ENCODE measurements at regions of chr5 and their contacts with region 1.

Region 1: DNA sequence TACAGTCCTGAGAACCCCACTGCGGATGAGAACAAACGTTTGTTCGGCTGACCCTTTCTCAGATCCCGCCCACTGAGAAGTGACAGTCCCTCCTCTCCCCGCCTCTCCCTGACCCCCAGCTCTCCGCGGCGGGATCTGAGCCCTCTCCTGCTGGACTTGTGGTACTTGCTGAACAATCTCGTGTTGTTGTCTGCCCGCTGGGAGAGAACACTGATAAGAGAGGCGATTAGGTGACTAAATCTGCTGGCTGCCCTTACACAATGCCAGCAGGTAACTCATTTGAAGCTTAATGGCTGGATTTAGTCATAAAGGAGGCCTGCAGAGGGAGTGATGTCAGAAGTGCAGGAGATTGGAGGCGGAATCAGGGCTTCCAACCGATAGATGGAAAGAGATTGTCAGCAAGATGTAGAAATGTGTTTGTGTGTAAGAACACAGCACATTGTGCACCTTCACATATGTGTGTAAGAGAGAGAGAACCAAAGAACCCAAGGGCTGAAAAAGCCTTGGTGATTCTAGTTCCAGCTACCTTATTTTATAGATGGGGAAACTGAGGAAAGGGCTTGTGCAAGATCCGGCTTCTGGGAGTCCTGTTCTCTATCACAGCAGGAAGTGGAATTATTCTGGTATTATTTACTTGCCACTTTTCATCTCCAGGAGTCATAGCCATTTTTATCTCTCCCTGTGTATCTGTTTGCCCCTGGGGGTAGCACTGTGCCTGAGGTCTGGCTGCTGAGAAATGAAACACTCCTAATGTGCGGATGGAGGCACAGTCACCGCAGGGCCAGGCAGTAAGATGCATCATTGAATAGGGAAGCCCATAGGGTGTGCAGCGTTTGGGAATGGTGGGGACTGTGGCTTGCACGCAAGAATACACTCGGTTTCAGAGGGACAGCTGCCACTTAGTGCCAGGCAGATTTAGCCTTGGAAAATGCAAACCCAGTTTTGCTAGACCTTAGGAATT is 203.7 kb upstream of the MSX2 start:
- DNase-seq: peak; percentile 94 to 97
- H3K4me3 ChIP-seq: no peak overlapping the region
- H3K4me3 Mint-ChIP-seq: peak overlapping the region; percentile 57
- H3K27ac Mint-ChIP-seq: peak overlapping the region; percentile 80
- H3K4me1 ChIP-seq: peaks cover 54% of the 10 kb centered on the region
- H3K4me1 Mint-ChIP-seq: peaks cover 39% of the 10 kb centered on the region
- H3K27me3 ChIP-seq: no peaks in the 10 kb centered on the region
- H3K27me3 Mint-ChIP-seq: no peaks in the 10 kb centered on the region
- CTCF ChIP-seq: peak in 1 of 2 experiments; percentile 32

Region 2: GRCh38 chr5:174424219-174425053 is 96.3 kb before region 1 on chr5:
- CTCF ChIA-PET with region 1: interaction called, 32 read pairs
- POLR2A ChIA-PET with region 1: no interaction called
- intact Hi-C with region 1: loop called (anchors 1 kb)
- DNase-seq: no peak
- H3K4me3 ChIP-seq: no peak overlapping the region
- H3K4me3 Mint-ChIP-seq: no peak overlapping the region
- H3K27ac Mint-ChIP-seq: no peak overlapping the region
- H3K4me1 ChIP-seq: peaks cover 18% of the 10 kb centered on the region
- H3K4me1 Mint-ChIP-seq: peaks cover 28% of the 10 kb centered on the region
- H3K27me3 ChIP-seq: no peaks in the 10 kb centered on the region
- H3K27me3 Mint-ChIP-seq: no peaks in the 10 kb centered on the region
- CTCF ChIP-seq: no peak

Region 3: GRCh38 chr5:174532455-174533453 is 12.1 kb after region 1 on chr5:
- CTCF ChIA-PET with region 1: interaction called, 7 read pairs
- POLR2A ChIA-PET with region 1: no interaction called
- intact Hi-C with region 1: loop called (anchors 1 kb)
- DNase-seq: peak; percentile 92 to 96
- H3K4me3 ChIP-seq: no peak overlapping the region
- H3K4me3 Mint-ChIP-seq: peak overlapping the region; percentile 63
- H3K27ac Mint-ChIP-seq: peak overlapping the region; percentile 39
- H3K4me1 ChIP-seq: peaks cover 65% of the 10 kb centered on the region
- H3K4me1 Mint-ChIP-seq: peaks cover 58% of the 10 kb centered on the region
- H3K27me3 ChIP-seq: no peaks in the 10 kb centered on the region
- H3K27me3 Mint-ChIP-seq: no peaks in the 10 kb centered on the region
- CTCF ChIP-seq: no peak

Region 4: DNA sequence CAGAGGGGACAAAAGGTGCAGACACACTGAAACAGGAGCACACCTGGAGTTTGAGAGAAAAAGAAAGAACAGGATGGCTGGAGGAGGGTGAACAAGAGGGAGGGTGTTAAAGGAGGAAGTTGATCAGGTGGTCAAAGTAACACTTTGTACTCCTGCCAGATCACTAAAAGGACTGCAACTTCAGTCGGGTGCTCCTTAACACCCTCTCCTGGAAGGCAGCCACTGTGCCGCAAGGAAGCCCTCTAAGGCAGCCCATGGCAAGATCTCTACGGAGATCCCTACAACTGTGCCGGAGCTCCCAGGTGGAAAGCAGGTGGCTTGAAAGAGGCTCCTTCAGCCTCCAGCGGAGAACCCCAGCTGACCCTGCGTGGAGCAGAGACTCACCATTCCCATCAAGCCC is 79.3 kb after region 1 on chr5:
- CTCF ChIA-PET with region 1: no interaction called
- POLR2A ChIA-PET with region 1: no interaction called
- intact Hi-C with region 1: loop called (anchors 5 kb)
- DNase-seq: peak; percentile 55 to 66
- H3K4me3 ChIP-seq: no peak overlapping the region
- H3K4me3 Mint-ChIP-seq: peak overlapping the region; percentile 56
- H3K27ac Mint-ChIP-seq: peak overlapping the region; percentile 80
- H3K4me1 ChIP-seq: peaks cover 69% of the 10 kb centered on the region
- H3K4me1 Mint-ChIP-seq: peaks cover 38% of the 10 kb centered on the region
- H3K27me3 ChIP-seq: no peaks in the 10 kb centered on the region
- H3K27me3 Mint-ChIP-seq: no peaks in the 10 kb centered on the region
- CTCF ChIP-seq: peak in 1 of 2 experiments; percentile 20

Region 5: DNA sequence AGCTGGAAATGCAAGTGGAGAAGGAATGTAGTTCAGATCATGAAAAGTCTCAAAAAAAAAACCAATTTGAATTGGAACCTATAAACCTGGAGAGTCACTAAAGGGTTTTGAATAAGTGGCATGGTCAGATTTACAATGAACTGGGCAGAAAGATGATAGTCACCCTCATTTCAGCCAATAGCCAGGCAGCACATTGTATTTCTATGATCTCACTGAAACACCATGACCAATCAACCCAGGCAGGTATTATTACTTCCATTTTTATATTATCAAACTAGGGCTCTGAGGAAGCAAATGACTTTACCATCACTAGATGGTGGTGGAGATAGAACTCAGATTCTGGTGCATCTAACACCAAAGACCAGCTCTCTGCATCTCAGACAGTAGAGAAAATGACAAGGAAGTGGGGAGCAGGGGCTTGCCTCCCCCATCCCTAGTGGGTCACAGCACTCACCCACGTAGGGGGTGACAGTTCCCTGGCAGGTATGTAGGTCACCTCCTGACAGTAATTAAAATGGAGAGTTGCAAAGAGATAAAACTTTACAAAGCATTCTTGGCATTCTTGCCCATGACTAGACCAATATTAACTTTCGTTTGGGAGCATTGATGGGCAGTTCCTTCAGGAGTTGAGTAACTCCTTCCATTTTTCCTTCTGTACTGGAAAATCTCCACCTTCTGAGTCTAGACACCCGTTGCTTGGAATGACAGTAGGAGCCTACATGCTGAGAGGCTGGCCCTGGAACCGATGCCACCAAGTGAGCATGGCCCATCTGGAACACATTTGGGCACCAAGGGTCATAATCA is 122.0 kb after region 1 on chr5:
- CTCF ChIA-PET with region 1: no interaction called
- POLR2A ChIA-PET with region 1: no interaction called
- intact Hi-C with region 1: loop called (anchors 5 kb)
- DNase-seq: peak; percentile 72 to 73
- H3K4me3 ChIP-seq: no peak overlapping the region
- H3K4me3 Mint-ChIP-seq: peak overlapping the region; percentile 25
- H3K27ac Mint-ChIP-seq: peak overlapping the region; percentile 61
- H3K4me1 ChIP-seq: peaks cover 40% of the 10 kb centered on the region
- H3K4me1 Mint-ChIP-seq: peaks cover 48% of the 10 kb centered on the region
- H3K27me3 ChIP-seq: no peaks in the 10 kb centered on the region
- H3K27me3 Mint-ChIP-seq: no peaks in the 10 kb centered on the region
- CTCF ChIP-seq: no peak

Region 6: DNA sequence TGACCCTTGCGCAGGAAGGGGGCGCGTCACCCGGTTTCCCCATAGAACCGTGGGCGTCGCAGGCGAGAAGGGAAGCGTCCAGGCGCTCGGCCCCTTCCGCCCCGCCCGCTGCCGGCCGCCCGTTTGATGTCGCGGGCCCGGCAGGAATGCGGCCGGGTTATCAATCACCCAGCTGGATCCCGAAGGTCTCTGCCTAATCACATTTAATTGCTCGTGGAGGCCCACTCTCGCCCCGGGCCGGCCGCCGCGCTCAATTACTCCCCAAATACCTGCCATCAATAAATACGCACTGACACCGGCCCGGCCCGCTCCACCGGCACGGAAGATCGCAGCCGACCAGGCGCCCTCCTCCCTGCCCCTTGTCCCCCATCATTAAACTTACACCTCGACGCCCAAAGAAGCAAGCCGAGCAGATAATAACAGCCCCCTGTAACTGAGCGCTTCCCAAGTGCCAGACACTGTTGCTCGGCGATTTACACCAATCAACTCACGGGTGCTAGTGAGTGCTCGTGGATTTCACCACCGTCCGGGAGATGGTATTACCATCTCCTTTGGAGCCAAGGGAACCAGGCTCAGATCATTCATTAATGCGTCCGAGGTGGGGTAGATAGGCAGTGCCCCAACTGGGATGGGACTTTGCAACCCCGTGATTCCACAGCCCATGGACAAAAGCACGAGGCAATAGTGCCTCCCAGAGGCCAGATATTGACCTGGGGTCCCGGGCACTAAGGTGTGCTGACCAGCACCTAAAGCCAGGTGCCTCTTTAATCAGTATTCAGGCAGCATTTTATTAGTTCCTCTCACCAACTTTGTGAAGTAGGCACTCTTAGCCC is 215.0 kb after region 1 on chr5:
- CTCF ChIA-PET with region 1: interaction called, 7 read pairs
- POLR2A ChIA-PET with region 1: no interaction called
- intact Hi-C with region 1: loop called (anchors 1 kb)
- DNase-seq: peak; percentile 87 to 90
- H3K4me3 ChIP-seq: peak overlapping the region; percentile 50
- H3K4me3 Mint-ChIP-seq: peak overlapping the region; percentile 86
- H3K27ac Mint-ChIP-seq: peak overlapping the region; percentile 52
- H3K4me1 ChIP-seq: peaks cover 36% of the 10 kb centered on the region
- H3K4me1 Mint-ChIP-seq: peaks cover 24% of the 10 kb centered on the region
- H3K27me3 ChIP-seq: no peaks in the 10 kb centered on the region
- H3K27me3 Mint-ChIP-seq: no peaks in the 10 kb centered on the region
- CTCF ChIP-seq: peak; percentile 74 to 90

Measured in Caco-2 (cell line).